CD8-positive, alpha-beta T cell (primary cell): ENCODE measurements at regions of chr17 and their contacts with region 1.

Region 1: GRCh38 chr17:3965118-3965803 is 1.0 kb upstream of the ATP2A3 start:
- DNase-seq: peak; percentile 33 to 81 (median 73)
- ATAC-seq: peak; percentile 51
- H3K4me3 ChIP-seq: peak overlapping the region; percentile 71 to 83
- H3K4me3 Mint-ChIP-seq: peak overlapping the region; percentile 91
- H3K27ac ChIP-seq: peak overlapping the region; percentile 76 to 77
- H3K27ac Mint-ChIP-seq: peak overlapping the region; percentile 94
- H3K4me1 ChIP-seq: peaks cover 39% of the 10 kb centered on the region
- H3K4me1 Mint-ChIP-seq: peaks cover 40% of the 10 kb centered on the region
- H3K27me3 ChIP-seq: no peaks in the 10 kb centered on the region
- H3K27me3 Mint-ChIP-seq: no peaks in the 10 kb centered on the region
- CTCF ChIP-seq: no peak

Region 2: GRCh38 chr17:3668279-3669085 is 296.8 kb before region 1 on chr17 and contains the starts of genes EMC6 and TAX1BP3:
- CTCF ChIA-PET with region 1: no interaction called
- POLR2A ChIA-PET with region 1: no interaction called
- intact Hi-C with region 1: loop called in 1 of 2 experiments (anchors 5 kb)
- DNase-seq: peak; percentile 97 to 100 (median 98)
- ATAC-seq: peak; percentile 92
- H3K4me3 ChIP-seq: peak within 1 kb of the TSS; percentile 73 to 100
- H3K4me3 Mint-ChIP-seq: peak within 1 kb of the TSS; percentile 90
- H3K27ac ChIP-seq: peak within 1 kb of the TSS; percentile 58 to 86
- H3K27ac Mint-ChIP-seq: peak within 1 kb of the TSS; percentile 81
- H3K4me1 ChIP-seq: peaks cover 21% of the 10 kb centered on the region
- H3K4me1 Mint-ChIP-seq: peaks cover 22% of the 10 kb centered on the region
- H3K27me3 ChIP-seq: no peaks in the 10 kb centered on the region
- H3K27me3 Mint-ChIP-seq: no peaks in the 10 kb centered on the region
- CTCF ChIP-seq: no peak
- total RNA-seq, gene EMC6: 39.4 to 41.6 TPM
- total RNA-seq, gene TAX1BP3: 5.5 to 5.8 TPM

Region 3: GRCh38 chr17:3944485-3945388 is 20.5 kb before region 1 on chr17:
- CTCF ChIA-PET with region 1: interaction called, 6 read pairs
- POLR2A ChIA-PET with region 1: no interaction called
- intact Hi-C with region 1: loop called (anchors 2 kb)
- DNase-seq: peak in 6 of 9 experiments; percentile 39 to 60 (median 56)
- ATAC-seq: peak; percentile 93
- H3K4me3 ChIP-seq: no peak overlapping the region
- H3K4me3 Mint-ChIP-seq: no peak overlapping the region
- H3K27ac ChIP-seq: no peak overlapping the region
- H3K27ac Mint-ChIP-seq: no peak overlapping the region
- H3K4me1 ChIP-seq: no peaks in the 10 kb centered on the region
- H3K4me1 Mint-ChIP-seq: no peaks in the 10 kb centered on the region
- H3K27me3 ChIP-seq: no peaks in the 10 kb centered on the region
- H3K27me3 Mint-ChIP-seq: no peaks in the 10 kb centered on the region
- CTCF ChIP-seq: no peak

Region 4: GRCh38 chr17:3986270-3986938 is 21.1 kb after region 1 on chr17:
- CTCF ChIA-PET with region 1: no interaction called
- POLR2A ChIA-PET with region 1: no interaction called
- intact Hi-C with region 1: no loop called
- DNase-seq: no peak
- ATAC-seq: no peak
- H3K4me3 ChIP-seq: no peak overlapping the region
- H3K4me3 Mint-ChIP-seq: no peak overlapping the region
- H3K27ac ChIP-seq: no peak overlapping the region
- H3K27ac Mint-ChIP-seq: no peak overlapping the region
- H3K4me1 ChIP-seq: no peaks in the 10 kb centered on the region
- H3K4me1 Mint-ChIP-seq: peaks cover 4% of the 10 kb centered on the region
- H3K27me3 ChIP-seq: peaks cover 0 to 2% of the 10 kb centered on the region in 2 experiments
- H3K27me3 Mint-ChIP-seq: no peaks in the 10 kb centered on the region
- CTCF ChIP-seq: no peak

Region 5: DNA sequence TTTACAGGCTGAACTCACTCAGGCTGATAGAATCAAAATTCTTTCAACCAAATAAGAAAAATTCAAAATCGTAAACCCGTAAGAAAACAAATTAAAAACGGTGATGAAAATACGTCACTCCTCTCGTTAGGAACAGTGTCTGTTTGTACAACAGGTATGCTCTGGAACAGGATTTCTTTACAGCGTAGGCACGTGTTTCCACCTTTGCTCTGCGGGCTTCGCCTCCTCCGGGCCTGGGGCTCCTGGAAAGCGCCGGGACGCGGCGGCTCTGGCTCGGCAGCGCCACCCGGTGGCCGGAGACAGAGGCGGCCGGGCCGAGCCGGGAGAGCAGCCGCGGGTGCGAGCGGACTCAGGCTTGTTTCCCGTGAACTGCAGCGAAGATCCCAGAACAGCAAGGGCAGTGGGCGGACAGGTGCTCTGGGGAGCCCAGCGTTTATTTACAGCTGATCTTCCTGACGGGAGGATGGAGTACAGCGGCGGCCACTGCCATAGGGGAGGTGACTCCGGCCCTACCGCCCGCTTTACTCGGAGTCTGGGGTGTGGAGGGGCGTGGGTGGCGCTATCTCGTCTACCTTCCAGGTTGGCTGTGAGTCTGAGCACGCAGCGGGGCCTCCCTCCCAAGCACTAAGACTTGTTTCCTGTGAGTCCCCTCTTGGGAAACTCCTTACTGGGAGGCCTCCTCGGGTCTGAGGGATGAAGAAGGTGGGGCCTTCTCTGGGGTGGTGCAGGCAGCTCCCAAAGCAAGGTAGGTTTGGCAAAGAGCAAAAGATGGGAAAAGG is 39.4 kb after region 1 on chr17:
- CTCF ChIA-PET with region 1: interaction called, 18 read pairs
- POLR2A ChIA-PET with region 1: no interaction called
- intact Hi-C with region 1: loop called (anchors 2 kb)
- DNase-seq: peak; percentile 16 to 79 (median 58)
- ATAC-seq: peak; percentile 94
- H3K4me3 ChIP-seq: no peak overlapping the region
- H3K4me3 Mint-ChIP-seq: no peak overlapping the region
- H3K27ac ChIP-seq: no peak overlapping the region
- H3K27ac Mint-ChIP-seq: no peak overlapping the region
- H3K4me1 ChIP-seq: peaks cover 4% of the 10 kb centered on the region
- H3K4me1 Mint-ChIP-seq: peaks cover 4% of the 10 kb centered on the region
- H3K27me3 ChIP-seq: no peaks in the 10 kb centered on the region
- H3K27me3 Mint-ChIP-seq: no peaks in the 10 kb centered on the region
- CTCF ChIP-seq: peak; percentile 98